ENCODE measurements at regions of chr7 and their contacts with region 1.

Region 1: DNA sequence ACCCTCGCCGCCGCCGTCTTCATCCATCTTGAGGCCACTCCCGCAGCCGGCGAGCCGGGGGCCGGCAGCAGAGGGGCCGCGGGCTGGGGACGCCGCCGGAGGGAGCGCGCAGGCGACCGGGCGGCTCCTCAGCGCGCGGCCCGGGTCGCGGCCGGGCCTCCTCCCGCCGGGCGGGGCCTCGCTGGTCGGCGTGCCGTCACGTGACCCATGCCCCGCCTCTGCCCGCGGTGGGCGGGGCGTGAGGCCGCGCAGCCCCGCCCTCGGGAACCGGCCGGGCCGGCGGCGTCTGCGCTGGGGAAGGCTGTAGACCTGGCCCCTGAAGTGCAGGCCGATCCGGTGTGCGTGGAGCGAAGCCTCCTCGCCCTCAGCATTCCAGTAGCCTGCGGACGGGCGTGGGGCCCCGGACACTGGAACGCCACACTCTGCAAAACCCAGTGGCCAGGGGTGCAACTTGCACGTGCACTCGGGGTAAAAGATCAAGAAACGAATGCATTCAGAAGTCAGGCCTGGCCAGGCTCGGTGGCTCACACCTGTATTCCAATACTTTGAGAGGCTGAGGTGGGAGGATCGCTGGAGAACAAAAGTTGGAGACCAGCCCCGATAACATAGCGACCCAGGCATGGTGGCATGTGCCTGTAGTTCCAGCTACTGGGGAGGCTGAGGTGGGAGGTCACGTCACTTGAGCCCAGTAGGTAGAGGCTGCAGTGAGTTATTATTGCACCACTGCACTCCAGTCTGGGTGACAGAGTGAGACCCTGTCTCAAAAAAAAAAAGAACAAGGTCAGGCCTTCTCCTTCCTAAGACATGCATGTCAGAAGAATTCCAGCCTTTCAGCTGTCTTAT is at the start of gene CYTH3:
- DNase-seq: peak; percentile 95
- ATAC-seq: peak; percentile 93
- H3K4me3 Mint-ChIP-seq: peak within 1 kb of the TSS; percentile 89
- H3K27ac Mint-ChIP-seq: peak within 1 kb of the TSS; percentile 50
- H3K4me1 Mint-ChIP-seq: peaks cover 19% of the 10 kb centered on the region
- H3K27me3 Mint-ChIP-seq: peaks cover 7% of the 10 kb centered on the region
- CTCF ChIP-seq: no peak
- total RNA-seq, gene CYTH3: 2.6 and 3.6 TPM in 2 replicates

Region 2: DNA sequence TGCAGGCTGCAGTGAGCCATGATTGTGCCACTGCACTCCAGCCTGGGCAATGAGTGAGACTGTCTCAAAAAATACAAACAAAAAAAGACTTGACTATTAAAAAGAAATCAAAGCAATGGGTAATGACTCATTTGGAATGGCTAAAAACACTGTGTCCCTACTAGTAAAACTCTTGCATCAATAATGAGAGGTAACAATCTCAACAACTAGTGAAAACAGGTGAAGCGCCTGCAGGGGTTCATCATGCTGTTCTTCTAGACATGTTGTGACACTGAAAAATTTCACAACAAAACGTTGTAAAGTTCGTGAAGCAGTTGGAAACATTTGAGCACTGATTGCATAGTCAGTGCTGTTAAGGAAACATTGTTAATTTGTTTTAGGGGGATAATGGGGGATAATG is 1016.9 kb before region 1 on chr7:
- CTCF ChIA-PET with region 1: no interaction called
- POLR2A ChIA-PET with region 1: no interaction called
- intact Hi-C with region 1: no loop called
- DNase-seq: no peak
- ATAC-seq: no peak
- H3K4me3 Mint-ChIP-seq: no peak overlapping the region
- H3K27ac Mint-ChIP-seq: no peak overlapping the region
- H3K4me1 Mint-ChIP-seq: no peaks in the 10 kb centered on the region
- H3K27me3 Mint-ChIP-seq: peaks cover 6% of the 10 kb centered on the region
- CTCF ChIP-seq: no peak

Region 3: DNA sequence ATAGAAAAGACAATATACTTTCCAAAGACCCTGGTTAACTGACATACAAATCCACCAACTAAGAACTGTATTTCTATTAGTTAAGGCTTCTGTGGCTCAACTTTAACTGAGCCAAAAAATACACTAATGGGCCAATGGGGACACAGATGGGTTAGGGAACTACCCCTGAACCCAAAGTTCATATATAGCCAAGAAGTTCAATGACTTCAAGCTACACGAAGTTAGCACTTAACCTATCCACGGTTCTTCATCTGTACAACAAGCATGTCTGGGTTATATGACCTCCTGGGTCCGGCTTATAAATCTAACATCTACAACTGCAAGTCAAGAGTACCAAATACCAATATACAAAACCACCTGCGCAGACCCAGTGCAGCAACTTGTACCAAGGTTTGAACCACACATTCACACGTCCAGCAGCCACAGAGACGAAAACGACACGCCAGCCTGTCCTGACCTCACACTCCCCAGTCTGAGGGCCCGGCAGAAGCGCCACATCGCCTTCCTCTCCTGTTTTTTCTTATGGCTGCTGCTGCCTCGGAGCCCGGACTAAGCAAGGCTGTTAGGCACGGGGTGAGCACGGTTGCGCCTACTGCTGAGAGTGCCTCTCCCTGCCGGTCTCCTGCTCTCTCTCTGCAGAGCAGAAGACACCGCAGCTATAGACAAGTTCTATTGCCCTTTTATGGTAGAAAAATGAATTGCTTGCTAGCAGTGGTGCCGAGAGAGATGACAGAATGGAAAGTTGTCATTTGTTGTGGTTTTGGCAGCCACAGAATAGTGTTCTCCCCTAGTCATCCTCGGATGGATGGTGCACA is 577.6 kb before region 1 on chr7:
- CTCF ChIA-PET with region 1: no interaction called
- POLR2A ChIA-PET with region 1: no interaction called
- intact Hi-C with region 1: no loop called
- DNase-seq: no peak
- ATAC-seq: peak; percentile 48
- H3K4me3 Mint-ChIP-seq: peak overlapping the region; percentile 87
- H3K27ac Mint-ChIP-seq: peak overlapping the region; percentile 91
- H3K4me1 Mint-ChIP-seq: peaks cover 100% of the 10 kb centered on the region
- H3K27me3 Mint-ChIP-seq: no peaks in the 10 kb centered on the region
- CTCF ChIP-seq: no peak

Region 4: GRCh38 chr7:5822742-5823503 is 449.8 kb before region 1 on chr7:
- CTCF ChIA-PET with region 1: no interaction called
- POLR2A ChIA-PET with region 1: no interaction called
- intact Hi-C with region 1: loop called (anchors 5 kb)
- DNase-seq: peak; percentile 84
- ATAC-seq: peak; percentile 99
- H3K4me3 Mint-ChIP-seq: peak overlapping the region; percentile 89
- H3K27ac Mint-ChIP-seq: peak overlapping the region; percentile 89
- H3K4me1 Mint-ChIP-seq: peaks cover 27% of the 10 kb centered on the region
- H3K27me3 Mint-ChIP-seq: no peaks in the 10 kb centered on the region
- CTCF ChIP-seq: no peak

Region 5: GRCh38 chr7:6160191-6160623 is 112.5 kb before region 1 on chr7:
- CTCF ChIA-PET with region 1: interaction called, 4 read pairs
- POLR2A ChIA-PET with region 1: no interaction called
- intact Hi-C with region 1: loop called (anchors 5 kb)
- DNase-seq: no peak
- ATAC-seq: no peak
- H3K4me3 Mint-ChIP-seq: no peak overlapping the region
- H3K27ac Mint-ChIP-seq: no peak overlapping the region
- H3K4me1 Mint-ChIP-seq: no peaks in the 10 kb centered on the region
- H3K27me3 Mint-ChIP-seq: no peaks in the 10 kb centered on the region
- CTCF ChIP-seq: no peak

Region 6: GRCh38 chr7:6228361-6229229 is 44.1 kb before region 1 on chr7:
- CTCF ChIA-PET with region 1: no interaction called
- POLR2A ChIA-PET with region 1: no interaction called
- intact Hi-C with region 1: loop called (anchors 5 kb)
- DNase-seq: no peak
- ATAC-seq: peak; percentile 83
- H3K4me3 Mint-ChIP-seq: peak overlapping the region; percentile 16
- H3K27ac Mint-ChIP-seq: peak overlapping the region; percentile 11
- H3K4me1 Mint-ChIP-seq: peaks cover 32% of the 10 kb centered on the region
- H3K27me3 Mint-ChIP-seq: peaks cover 5% of the 10 kb centered on the region
- CTCF ChIP-seq: no peak

Region 7: GRCh38 chr7:6256677-6257535 is 15.8 kb before region 1 on chr7:
- CTCF ChIA-PET with region 1: interaction called, 5 read pairs
- POLR2A ChIA-PET with region 1: interaction called, 3 read pairs
- intact Hi-C with region 1: loop called (anchors 1 kb)
- DNase-seq: no peak
- ATAC-seq: peak; percentile 49
- H3K4me3 Mint-ChIP-seq: peak overlapping the region; percentile 24
- H3K27ac Mint-ChIP-seq: peak overlapping the region; percentile 57
- H3K4me1 Mint-ChIP-seq: peaks cover 41% of the 10 kb centered on the region
- H3K27me3 Mint-ChIP-seq: peaks cover 6% of the 10 kb centered on the region
- CTCF ChIP-seq: no peak

Measured in activated B cell treated with CpG ODN at 0.5 μM for 24 hours (primary cell).